ENCODE measurements at regions of chr11 and their contacts with region 1.

Region 1: DNA sequence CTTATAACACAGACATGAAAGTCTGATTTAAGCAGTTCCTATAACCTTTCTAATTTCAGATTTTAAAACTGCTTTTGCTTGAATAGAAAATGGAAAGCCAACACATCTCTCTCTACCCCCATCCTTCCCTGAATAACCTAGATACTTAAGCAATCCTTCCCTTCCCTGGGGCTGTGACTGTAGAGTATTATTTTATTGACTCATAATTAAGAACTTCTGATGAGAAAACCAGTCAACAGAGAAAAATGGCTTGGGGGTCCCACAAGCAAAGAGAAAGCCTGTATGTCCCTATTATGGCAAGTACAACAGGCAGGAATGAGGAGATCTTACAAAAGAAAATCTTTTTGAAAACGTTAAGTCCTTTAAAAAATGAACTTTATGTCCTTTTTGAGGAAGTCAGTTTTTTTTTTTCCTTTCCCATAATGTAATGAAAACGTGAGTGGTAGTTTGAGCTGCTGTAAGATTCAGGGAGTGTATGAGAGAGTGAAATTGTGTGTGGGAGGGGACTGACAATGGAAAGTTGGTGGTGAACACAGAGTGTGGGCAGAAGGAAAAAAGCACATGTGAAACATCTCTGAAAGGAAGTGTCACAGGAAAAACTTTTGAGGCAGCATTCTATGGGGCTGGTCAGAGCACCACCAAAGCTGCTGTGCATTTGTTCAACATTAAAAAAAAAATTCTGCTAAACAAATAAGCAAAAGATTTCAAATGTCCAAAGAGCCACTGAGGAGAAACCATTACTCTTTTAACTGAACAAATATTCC is 154.6 kb downstream of the MAML2 start:
- DNase-seq: peak; percentile 74
- H3K4me3 Mint-ChIP-seq: peak overlapping the region; percentile 26
- H3K27ac Mint-ChIP-seq: peak overlapping the region; percentile 66
- H3K4me1 Mint-ChIP-seq: peaks cover 52% of the 10 kb centered on the region
- H3K27me3 Mint-ChIP-seq: no peaks in the 10 kb centered on the region

Region 2: DNA sequence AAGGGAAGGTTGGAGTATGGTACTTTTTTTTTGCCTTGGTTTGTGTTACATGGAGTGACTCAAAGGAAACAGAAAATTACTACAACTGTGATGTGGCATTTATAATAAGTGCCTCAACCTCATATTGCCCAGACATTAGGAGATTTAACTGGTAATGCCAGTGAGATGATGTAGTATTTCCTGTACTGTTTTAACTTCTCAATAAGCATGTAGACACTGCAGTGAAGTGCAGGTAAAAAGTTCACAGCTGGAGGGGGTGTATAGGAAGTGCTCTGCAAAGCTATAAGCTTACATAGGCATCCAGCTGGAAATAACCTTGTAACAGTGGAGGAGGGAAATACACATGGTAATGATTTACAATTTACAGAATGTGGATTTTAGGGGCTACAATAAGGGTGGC is 126.3 kb before region 1 on chr11:
- intact Hi-C with region 1: loop called (anchors 1 kb)
- DNase-seq: peak; percentile 70
- H3K4me3 Mint-ChIP-seq: peak overlapping the region; percentile 11
- H3K27ac Mint-ChIP-seq: peak overlapping the region; percentile 86
- H3K4me1 Mint-ChIP-seq: peaks cover 43% of the 10 kb centered on the region
- H3K27me3 Mint-ChIP-seq: no peaks in the 10 kb centered on the region

Region 3: DNA sequence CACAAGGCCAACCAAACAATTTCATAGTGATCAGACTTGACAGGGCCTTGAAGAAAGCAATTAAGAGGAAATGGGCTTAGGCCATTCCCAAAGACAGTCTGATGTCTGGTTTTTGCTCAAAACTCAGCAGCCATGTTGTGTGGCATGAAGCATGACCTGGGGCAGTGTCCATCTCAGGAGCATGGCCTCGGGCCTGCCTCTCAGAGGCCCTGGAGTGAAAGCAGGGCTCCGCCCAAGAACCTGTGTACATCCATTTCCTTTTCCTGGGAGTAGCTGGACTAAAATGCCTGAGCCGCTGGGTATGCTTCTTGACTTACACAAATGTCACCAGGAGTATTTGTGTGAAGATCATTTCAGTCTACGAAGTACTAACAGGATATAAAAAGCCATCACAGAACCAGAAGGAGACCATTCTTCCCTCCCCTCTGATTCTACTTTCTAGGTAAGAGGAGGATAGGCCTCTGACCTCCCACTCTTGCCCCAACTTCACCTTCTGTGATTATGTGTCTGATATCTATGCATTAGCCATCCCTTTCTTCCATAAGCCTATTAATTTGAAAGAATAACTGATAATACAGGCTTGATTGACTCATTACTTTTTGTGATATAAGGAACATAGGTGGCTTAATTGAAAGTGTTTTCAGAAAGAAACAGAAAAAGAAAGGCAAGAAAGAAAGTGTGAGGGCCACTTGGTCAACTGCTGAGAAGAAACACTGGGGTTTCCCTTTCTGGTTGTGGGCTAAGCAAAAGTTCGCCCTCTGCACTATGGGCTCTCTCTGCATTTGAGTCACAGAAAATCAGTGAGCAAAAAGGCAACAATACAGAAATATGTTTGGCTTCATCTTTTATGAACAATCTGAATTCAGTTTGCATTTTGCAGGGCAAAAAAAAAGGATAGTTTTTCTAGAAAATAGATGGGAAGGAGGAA is 76.0 kb before region 1 on chr11:
- intact Hi-C with region 1: loop called (anchors 2 kb)
- DNase-seq: peak; percentile 65
- H3K4me3 Mint-ChIP-seq: peak overlapping the region; percentile 28
- H3K27ac Mint-ChIP-seq: peak overlapping the region; percentile 74
- H3K4me1 Mint-ChIP-seq: peaks cover 21% of the 10 kb centered on the region
- H3K27me3 Mint-ChIP-seq: no peaks in the 10 kb centered on the region

Region 4: GRCh38 chr11:96168623-96169022 is 19.8 kb before region 1 on chr11:
- intact Hi-C with region 1: loop called (anchors 2 kb)
- DNase-seq: no peak
- H3K4me3 Mint-ChIP-seq: no peak overlapping the region
- H3K27ac Mint-ChIP-seq: peak overlapping the region; percentile 81
- H3K4me1 Mint-ChIP-seq: peaks cover 50% of the 10 kb centered on the region
- H3K27me3 Mint-ChIP-seq: no peaks in the 10 kb centered on the region

Region 5: DNA sequence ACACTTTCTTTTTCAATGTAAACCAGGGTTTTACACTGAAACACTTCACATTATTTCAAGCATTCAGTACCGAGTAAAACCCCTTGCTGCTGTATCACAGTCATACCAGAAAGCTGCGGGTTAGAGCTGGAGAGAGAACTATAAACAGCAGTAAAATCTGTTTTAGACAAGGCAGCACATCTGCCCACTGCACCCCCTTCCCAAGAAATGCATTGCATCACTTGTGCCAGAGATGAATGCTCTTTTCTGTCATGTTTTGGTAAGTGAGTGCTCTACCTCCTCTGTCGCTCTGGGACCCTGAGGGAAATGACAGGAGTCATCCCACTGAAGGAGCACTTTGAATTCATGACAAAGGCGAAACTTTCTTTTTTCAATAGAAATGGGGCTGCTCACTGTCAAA is 47.3 kb after region 1 on chr11:
- intact Hi-C with region 1: loop called (anchors 1 kb)
- DNase-seq: peak; percentile 86
- H3K4me3 Mint-ChIP-seq: peak overlapping the region; percentile 76
- H3K27ac Mint-ChIP-seq: peak overlapping the region; percentile 95
- H3K4me1 Mint-ChIP-seq: peaks cover 30% of the 10 kb centered on the region
- H3K27me3 Mint-ChIP-seq: no peaks in the 10 kb centered on the region

Region 6: GRCh38 chr11:96284917-96285316 is 96.5 kb after region 1 on chr11:
- intact Hi-C with region 1: loop called (anchors 2 kb)
- DNase-seq: no peak
- H3K4me3 Mint-ChIP-seq: no peak overlapping the region
- H3K27ac Mint-ChIP-seq: peak overlapping the region; percentile 25
- H3K4me1 Mint-ChIP-seq: peaks cover 40% of the 10 kb centered on the region
- H3K27me3 Mint-ChIP-seq: no peaks in the 10 kb centered on the region

Measured in activated CD4-positive, alpha-beta T cell treated with anti-CD3 and anti-CD28 coated beads, Interleukin-2, amount 10 ng/mL, durations not matched to agents 24 days and 14 days (primary cell).